RWPE1 (cell line): ENCODE measurements at regions of chr19 and their contacts with region 1.

Region 1: GRCh38 chr19:42122691-42123607 is 9.3 kb downstream of the POU2F2 start:
- DNase-seq: no peak
- H3K27ac ChIP-seq: peak overlapping the region; percentile 86
- CTCF ChIP-seq: no peak

Region 2: DNA sequence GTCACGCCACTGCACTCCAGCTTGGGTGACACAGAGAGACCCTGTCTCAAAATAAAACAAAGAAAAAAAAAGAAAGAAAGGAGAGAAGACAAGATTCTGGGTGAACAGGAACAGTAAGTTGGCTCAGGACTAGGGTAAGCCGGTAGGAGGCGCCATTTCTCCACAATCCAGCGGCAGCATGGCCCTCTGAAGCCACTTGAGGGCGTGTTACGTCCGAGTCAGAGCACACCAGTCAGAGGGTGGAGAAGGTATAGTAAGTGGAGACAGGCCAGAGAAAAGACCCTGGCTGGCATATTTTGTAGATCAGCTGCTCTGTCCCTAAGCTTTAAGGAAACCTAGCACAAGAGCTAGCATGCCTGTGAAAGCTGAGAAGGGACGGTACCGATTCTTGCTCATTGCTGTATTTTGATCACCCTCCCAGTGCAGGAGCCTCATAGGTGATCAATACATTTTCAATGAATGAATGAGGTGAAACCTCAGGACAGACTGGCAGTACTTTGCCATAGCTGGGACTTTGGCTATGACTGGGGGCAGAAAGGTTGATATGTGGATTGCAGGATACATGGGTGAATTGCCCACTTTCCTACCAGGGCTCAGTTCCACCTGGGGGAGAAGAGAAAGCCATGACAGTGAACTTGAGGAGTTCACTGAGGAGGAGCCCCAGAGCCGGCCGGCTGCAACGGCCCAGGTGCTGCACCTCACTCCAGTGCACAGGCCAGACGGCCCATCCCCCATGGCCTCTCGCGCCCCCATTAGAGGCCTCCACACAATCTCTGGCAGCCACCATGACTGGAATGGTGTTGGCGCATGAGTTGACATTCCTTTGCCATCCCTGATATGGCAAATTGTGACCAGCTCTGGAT is 14.2 kb before region 1 on chr19:
- CTCF ChIA-PET with region 1: interaction called, 14 read pairs
- POLR2A ChIA-PET with region 1: no interaction called
- DNase-seq: peak; percentile 81
- H3K27ac ChIP-seq: peak overlapping the region; percentile 62
- CTCF ChIP-seq: peak; percentile 97